ENCODE measurements at regions of chr3 and their contacts with region 1.

Region 1: GRCh38 chr3:155753036-155753639 is 8.3 kb upstream of the PLCH1 start:
- H3K4me3 Mint-ChIP-seq: no peak overlapping the region
- H3K27ac Mint-ChIP-seq: no peak overlapping the region
- H3K4me1 Mint-ChIP-seq: no peaks in the 10 kb centered on the region
- H3K27me3 Mint-ChIP-seq: peaks cover under 1% of the 10 kb centered on the region

Region 2: DNA sequence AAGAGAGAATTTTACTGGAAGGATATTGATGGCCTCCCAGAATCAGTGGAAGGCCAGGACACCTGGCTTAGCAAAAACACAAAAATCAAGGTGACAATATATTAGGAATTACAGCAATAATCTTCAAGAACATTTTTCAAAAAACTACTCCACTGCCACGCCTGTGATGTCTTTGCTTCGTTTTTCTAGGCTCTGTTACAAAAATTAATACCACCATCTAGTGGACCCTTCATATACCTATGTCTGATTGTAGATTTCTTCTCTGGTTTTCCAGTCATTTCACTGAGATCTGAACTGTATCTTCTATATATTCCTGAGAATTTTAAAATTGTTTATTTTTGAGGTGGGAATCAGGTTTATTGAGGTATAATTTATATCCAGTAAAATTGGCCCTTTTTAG is 106.7 kb after region 1 on chr3:
- intact Hi-C with region 1: loop called (anchors 5 kb)
- H3K4me3 Mint-ChIP-seq: no peak overlapping the region
- H3K27ac Mint-ChIP-seq: no peak overlapping the region
- H3K4me1 Mint-ChIP-seq: peaks cover 12% of the 10 kb centered on the region
- H3K27me3 Mint-ChIP-seq: no peaks in the 10 kb centered on the region